MCF 10A (cell line): ENCODE measurements at regions of chr19 and their contacts with region 1.

Region 1: GRCh38 chr19:8005534-8006256 is at the start of gene ELAVL1:
- DNase-seq: peak; percentile 88
- H3K4me3 Mint-ChIP-seq: peak within 1 kb of the TSS; percentile 95
- H3K27ac Mint-ChIP-seq: peak within 1 kb of the TSS; percentile 71
- H3K4me1 Mint-ChIP-seq: peaks cover 19% of the 10 kb centered on the region
- H3K27me3 Mint-ChIP-seq: no peaks in the 10 kb centered on the region
- CTCF ChIP-seq: no peak
- total RNA-seq, gene ELAVL1: 53.7 and 58.1 TPM in 2 replicates

Region 2: GRCh38 chr19:7815325-7815724 is 190.4 kb before region 1 on chr19:
- CTCF ChIA-PET with region 1: no interaction called
- POLR2A ChIA-PET with region 1: no interaction called
- intact Hi-C with region 1: no loop called
- DNase-seq: no peak
- H3K4me3 Mint-ChIP-seq: no peak overlapping the region
- H3K27ac Mint-ChIP-seq: no peak overlapping the region
- H3K4me1 Mint-ChIP-seq: no peaks in the 10 kb centered on the region
- H3K27me3 Mint-ChIP-seq: peaks cover 16% of the 10 kb centered on the region
- CTCF ChIP-seq: no peak

Region 3: GRCh38 chr19:7852851-7853769 is 152.6 kb before region 1 on chr19:
- CTCF ChIA-PET with region 1: interaction called, 4 read pairs
- POLR2A ChIA-PET with region 1: no interaction called
- intact Hi-C with region 1: loop called (anchors 10 kb)
- DNase-seq: peak; percentile 82
- H3K4me3 Mint-ChIP-seq: no peak overlapping the region
- H3K27ac Mint-ChIP-seq: no peak overlapping the region
- H3K4me1 Mint-ChIP-seq: peaks cover 8% of the 10 kb centered on the region
- H3K27me3 Mint-ChIP-seq: no peaks in the 10 kb centered on the region
- CTCF ChIP-seq: peak; percentile 96

Region 4: GRCh38 chr19:7970716-7971448 is 34.8 kb before region 1 on chr19:
- CTCF ChIA-PET with region 1: interaction called, 57 read pairs
- POLR2A ChIA-PET with region 1: interaction called, 9 read pairs
- intact Hi-C with region 1: loop called (anchors 1 kb)
- DNase-seq: peak; percentile 72
- H3K4me3 Mint-ChIP-seq: no peak overlapping the region
- H3K27ac Mint-ChIP-seq: no peak overlapping the region
- H3K4me1 Mint-ChIP-seq: no peaks in the 10 kb centered on the region
- H3K27me3 Mint-ChIP-seq: no peaks in the 10 kb centered on the region
- CTCF ChIP-seq: peak; percentile 81

Region 5: DNA sequence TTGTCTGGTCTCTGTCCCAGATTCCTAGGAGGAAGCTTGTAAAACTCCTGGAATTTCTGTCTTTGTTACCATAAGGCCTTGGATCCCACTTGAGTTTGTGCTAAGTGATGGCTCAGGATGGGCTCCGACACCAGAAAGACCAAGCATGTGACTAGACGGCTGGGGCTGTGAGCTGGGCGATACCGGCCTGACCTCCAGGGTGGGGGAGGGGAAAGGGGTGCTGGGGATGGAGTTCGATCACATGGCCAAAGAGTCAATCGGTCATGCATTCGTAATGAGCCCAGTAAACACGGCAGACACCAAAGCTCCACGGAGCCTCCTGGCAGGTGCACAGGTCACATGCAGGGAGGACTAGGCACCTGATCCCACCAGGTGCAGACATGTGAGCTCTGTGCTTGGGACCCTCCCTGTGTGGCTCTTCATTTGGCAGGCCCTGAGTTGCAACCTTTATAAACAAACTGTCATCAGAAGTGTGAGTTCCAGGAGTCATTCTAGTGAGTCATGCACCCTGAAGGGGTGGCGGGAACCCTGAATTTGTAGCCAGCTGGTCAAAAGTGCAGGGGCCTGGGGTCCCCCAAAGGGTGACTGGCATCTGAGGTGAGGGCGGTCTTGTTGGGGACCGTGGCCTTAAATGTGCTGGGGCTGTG is 27.4 kb before region 1 on chr19:
- CTCF ChIA-PET with region 1: interaction called, 57 read pairs
- POLR2A ChIA-PET with region 1: interaction called, 4 read pairs
- intact Hi-C with region 1: no loop called
- DNase-seq: peak; percentile 20
- H3K4me3 Mint-ChIP-seq: no peak overlapping the region
- H3K27ac Mint-ChIP-seq: no peak overlapping the region
- H3K4me1 Mint-ChIP-seq: no peaks in the 10 kb centered on the region
- H3K27me3 Mint-ChIP-seq: no peaks in the 10 kb centered on the region
- CTCF ChIP-seq: no peak

Region 6: GRCh38 chr19:7986321-7987083 is 19.2 kb before region 1 on chr19:
- CTCF ChIA-PET with region 1: interaction called, 80 read pairs
- POLR2A ChIA-PET with region 1: interaction called, 35 read pairs
- intact Hi-C with region 1: loop called (anchors 2 kb)
- DNase-seq: peak; percentile 71
- H3K4me3 Mint-ChIP-seq: peak overlapping the region; percentile 50
- H3K27ac Mint-ChIP-seq: peak overlapping the region; percentile 95
- H3K4me1 Mint-ChIP-seq: peaks cover 48% of the 10 kb centered on the region
- H3K27me3 Mint-ChIP-seq: no peaks in the 10 kb centered on the region
- CTCF ChIP-seq: no peak

Region 7: GRCh38 chr19:8252922-8253589 is 247.4 kb after region 1 on chr19:
- CTCF ChIA-PET with region 1: interaction called, 4 read pairs
- POLR2A ChIA-PET with region 1: interaction called, 3 read pairs
- intact Hi-C with region 1: loop called (anchors 1 kb)
- DNase-seq: peak; percentile 86
- H3K4me3 Mint-ChIP-seq: no peak overlapping the region
- H3K27ac Mint-ChIP-seq: no peak overlapping the region
- H3K4me1 Mint-ChIP-seq: no peaks in the 10 kb centered on the region
- H3K27me3 Mint-ChIP-seq: no peaks in the 10 kb centered on the region
- CTCF ChIP-seq: peak; percentile 97